ENCODE measurements at regions of chr11 and their contacts with region 1.

Region 1: GRCh38 chr11:118227865-118228785 is 3.3 kb upstream of the JAML start:
- DNase-seq: peak; percentile 70
- ATAC-seq: peak; percentile 73
- H3K4me3 ChIP-seq: peak overlapping the region in 1 of 5 experiments; percentile 21
- H3K4me3 Mint-ChIP-seq: peak overlapping the region; percentile 72
- H3K27ac ChIP-seq: peak overlapping the region; percentile 66 to 80
- H3K27ac Mint-ChIP-seq: peak overlapping the region; percentile 88
- H3K4me1 ChIP-seq: peaks cover 62 to 65% of the 10 kb centered on the region in 2 donors
- H3K4me1 Mint-ChIP-seq: peaks cover 60% of the 10 kb centered on the region
- H3K27me3 ChIP-seq: peaks cover 0 to 7% (median 4%) of the 10 kb centered on the region in 4 experiments
- H3K27me3 Mint-ChIP-seq: peaks cover 8% of the 10 kb centered on the region
- CTCF ChIP-seq: no peak

Region 2: DNA sequence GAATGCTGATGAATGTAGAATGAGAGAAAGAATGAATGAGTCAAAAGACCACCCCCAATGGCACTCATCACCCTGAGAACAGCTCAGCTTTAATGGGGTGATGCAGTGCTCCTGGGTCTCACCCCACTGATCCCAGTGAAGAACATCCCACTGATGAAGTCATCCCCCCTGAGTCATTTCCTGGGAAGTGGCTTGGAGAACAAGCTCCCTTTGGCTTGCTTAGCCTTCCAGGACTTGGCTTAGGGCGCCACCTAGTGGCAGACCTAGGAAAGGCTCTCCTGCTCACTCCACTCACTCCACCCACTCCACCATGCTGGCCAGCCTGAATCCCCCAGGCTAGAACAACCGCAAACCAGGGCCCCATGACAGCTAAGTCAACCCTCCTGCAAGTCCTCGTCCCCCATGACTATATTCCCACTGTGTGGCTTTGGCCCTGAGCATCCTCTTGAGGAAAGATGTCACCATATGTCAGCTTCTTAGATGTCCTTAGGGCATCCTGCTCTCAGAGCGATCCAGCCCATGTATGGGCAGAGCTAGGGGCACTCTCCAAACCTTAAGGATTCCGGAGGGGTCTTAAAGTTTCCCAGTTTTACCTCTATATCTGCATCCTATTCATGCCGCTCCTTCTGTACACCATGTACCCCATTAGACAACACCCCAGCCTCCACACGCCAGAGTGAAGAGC is 281.1 kb before region 1 on chr11:
- CTCF ChIA-PET with region 1: no interaction called
- POLR2A ChIA-PET with region 1: no interaction called
- intact Hi-C with region 1: no loop called
- DNase-seq: peak; percentile 83
- ATAC-seq: peak; percentile 32
- H3K4me3 ChIP-seq: no peak overlapping the region
- H3K4me3 Mint-ChIP-seq: no peak overlapping the region
- H3K27ac ChIP-seq: no peak overlapping the region
- H3K27ac Mint-ChIP-seq: peak overlapping the region; percentile 60
- H3K4me1 ChIP-seq: peaks cover 33 to 46% of the 10 kb centered on the region in 2 donors
- H3K4me1 Mint-ChIP-seq: peaks cover 38% of the 10 kb centered on the region
- H3K27me3 ChIP-seq: no peaks in the 10 kb centered on the region
- H3K27me3 Mint-ChIP-seq: peaks cover 9% of the 10 kb centered on the region
- CTCF ChIP-seq: peak; percentile 98

Region 3: GRCh38 chr11:118010738-118011461 is 217.2 kb before region 1 on chr11:
- CTCF ChIA-PET with region 1: no interaction called
- POLR2A ChIA-PET with region 1: no interaction called
- intact Hi-C with region 1: loop called (anchors 10 kb)
- DNase-seq: peak; percentile 96
- ATAC-seq: peak; percentile 73
- H3K4me3 ChIP-seq: peak overlapping the region in 2 of 5 experiments; percentile 2 to 38
- H3K4me3 Mint-ChIP-seq: peak overlapping the region; percentile 75
- H3K27ac ChIP-seq: peak overlapping the region; percentile 95 to 99
- H3K27ac Mint-ChIP-seq: peak overlapping the region; percentile 99
- H3K4me1 ChIP-seq: peaks cover 99 to 100% of the 10 kb centered on the region in 2 donors
- H3K4me1 Mint-ChIP-seq: peaks cover 100% of the 10 kb centered on the region
- H3K27me3 ChIP-seq: no peaks in the 10 kb centered on the region
- H3K27me3 Mint-ChIP-seq: no peaks in the 10 kb centered on the region
- CTCF ChIP-seq: no peak

Region 4: GRCh38 chr11:118214210-118214914 is 13.8 kb before region 1 on chr11:
- CTCF ChIA-PET with region 1: interaction called, 6 read pairs
- POLR2A ChIA-PET with region 1: interaction called, 3 read pairs
- intact Hi-C with region 1: loop called (anchors 2 kb)
- DNase-seq: peak; percentile 67
- ATAC-seq: peak; percentile 78
- H3K4me3 ChIP-seq: peak overlapping the region in 3 of 5 experiments; percentile 22 to 34 (median 28)
- H3K4me3 Mint-ChIP-seq: peak overlapping the region; percentile 84
- H3K27ac ChIP-seq: no peak overlapping the region
- H3K27ac Mint-ChIP-seq: peak overlapping the region; percentile 85
- H3K4me1 ChIP-seq: peaks cover 50 to 52% of the 10 kb centered on the region in 2 donors
- H3K4me1 Mint-ChIP-seq: peaks cover 53% of the 10 kb centered on the region
- H3K27me3 ChIP-seq: peaks cover 0 to 16% (median 8%) of the 10 kb centered on the region in 4 experiments
- H3K27me3 Mint-ChIP-seq: peaks cover 42% of the 10 kb centered on the region
- CTCF ChIP-seq: no peak

Region 5: DNA sequence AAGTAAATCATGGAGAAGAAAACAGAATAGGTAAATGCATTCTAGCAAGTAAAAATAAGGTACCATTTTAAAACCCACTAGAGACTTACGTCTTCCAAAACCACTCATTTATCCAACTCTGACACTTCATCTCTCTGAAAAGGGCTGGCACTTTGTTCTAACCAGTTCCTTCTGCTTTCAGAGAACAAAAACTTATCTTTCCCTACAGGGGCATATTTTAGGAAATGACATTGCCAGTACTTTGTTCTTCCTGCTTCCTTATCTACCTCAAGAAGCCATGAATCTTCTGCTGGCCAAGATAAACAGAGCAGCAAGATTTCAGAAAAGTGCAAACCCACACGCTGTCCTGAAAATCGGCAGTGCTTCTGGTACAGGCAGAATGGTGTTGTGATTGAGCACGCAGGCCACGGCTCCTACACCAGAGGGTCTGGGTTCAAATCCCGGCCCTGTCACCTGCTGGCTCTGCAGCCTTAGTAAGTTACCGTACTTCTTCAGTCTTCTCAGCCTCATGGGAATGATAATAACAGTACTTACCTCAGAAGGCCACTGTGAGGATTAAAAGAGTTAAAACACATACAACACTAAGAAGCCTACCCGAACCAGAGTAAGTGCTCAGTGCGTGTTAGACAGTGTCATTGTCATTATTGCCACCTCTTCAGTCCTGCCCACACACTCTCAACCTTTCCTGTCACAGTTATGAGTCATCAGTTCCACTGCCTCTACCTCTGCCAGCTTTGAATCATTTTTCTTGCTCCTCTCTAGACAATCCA is 13.1 kb after region 1 on chr11:
- CTCF ChIA-PET with region 1: no interaction called
- POLR2A ChIA-PET with region 1: interaction called, 3 read pairs
- intact Hi-C with region 1: loop called (anchors 2 kb)
- DNase-seq: no peak
- ATAC-seq: peak; percentile 91
- H3K4me3 ChIP-seq: peak overlapping the region in 1 of 5 experiments; percentile 1
- H3K4me3 Mint-ChIP-seq: peak overlapping the region; percentile 5
- H3K27ac ChIP-seq: no peak overlapping the region
- H3K27ac Mint-ChIP-seq: no peak overlapping the region
- H3K4me1 ChIP-seq: peaks cover 15 to 21% of the 10 kb centered on the region in 2 donors
- H3K4me1 Mint-ChIP-seq: peaks cover 39% of the 10 kb centered on the region
- H3K27me3 ChIP-seq: no peaks in the 10 kb centered on the region
- H3K27me3 Mint-ChIP-seq: peaks cover 4% of the 10 kb centered on the region
- CTCF ChIP-seq: no peak

Region 6: DNA sequence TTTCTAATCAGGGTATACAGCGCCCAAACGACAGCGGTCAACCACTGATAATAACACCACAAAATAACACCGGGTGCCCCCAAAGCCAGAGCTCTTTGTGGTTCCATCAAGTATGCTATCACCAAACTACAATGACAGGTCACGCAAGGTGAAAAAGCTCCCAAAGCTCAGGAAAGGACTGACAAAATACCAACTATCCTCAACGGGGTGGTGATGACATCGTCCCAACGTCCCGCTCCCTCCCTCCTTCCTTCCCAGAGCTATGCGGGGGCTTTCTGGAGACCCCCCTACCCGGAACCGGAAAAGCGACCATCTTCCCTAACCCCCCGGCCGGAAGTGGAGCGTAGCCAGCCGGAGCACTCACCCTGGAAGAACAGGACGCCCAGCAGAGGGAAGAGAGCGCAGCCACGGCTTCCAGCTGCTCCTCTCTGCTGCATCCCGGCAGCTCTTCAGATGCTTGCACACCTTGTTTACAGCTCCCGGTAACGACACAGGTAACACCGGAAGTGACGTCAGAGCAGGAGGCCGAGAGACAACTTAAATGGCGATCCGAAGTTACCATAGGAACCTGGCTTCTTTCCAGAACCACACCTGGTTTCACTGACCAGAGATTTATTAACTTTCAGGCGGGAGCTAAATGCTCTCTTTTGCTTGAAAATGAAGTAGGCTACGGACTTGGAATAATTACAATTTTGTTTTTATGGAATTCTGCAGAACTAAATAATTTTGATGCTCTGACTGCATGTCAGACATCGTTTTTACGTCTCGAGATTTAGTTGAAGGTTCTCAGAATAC is 23.9 kb after region 1 on chr11 and contains the start of gene MPZL3:
- CTCF ChIA-PET with region 1: interaction called, 3 read pairs
- POLR2A ChIA-PET with region 1: interaction called, 4 read pairs
- intact Hi-C with region 1: loop called (anchors 1 kb)
- DNase-seq: peak; percentile 95
- ATAC-seq: peak; percentile 76
- H3K4me3 ChIP-seq: peak within 1 kb of the TSS; percentile 96 to 100 (median 97)
- H3K4me3 Mint-ChIP-seq: peak within 1 kb of the TSS; percentile 98
- H3K27ac ChIP-seq: peak within 1 kb of the TSS; percentile 91 to 97
- H3K27ac Mint-ChIP-seq: peak within 1 kb of the TSS; percentile 99
- H3K4me1 ChIP-seq: peaks cover 6 to 10% of the 10 kb centered on the region in 2 donors
- H3K4me1 Mint-ChIP-seq: peaks cover 13% of the 10 kb centered on the region
- H3K27me3 ChIP-seq: no peaks in the 10 kb centered on the region
- H3K27me3 Mint-ChIP-seq: peaks cover 20% of the 10 kb centered on the region
- CTCF ChIP-seq: no peak
- total RNA-seq, gene MPZL3: 4.2 and 4.9 TPM in 2 replicates

Region 7: DNA sequence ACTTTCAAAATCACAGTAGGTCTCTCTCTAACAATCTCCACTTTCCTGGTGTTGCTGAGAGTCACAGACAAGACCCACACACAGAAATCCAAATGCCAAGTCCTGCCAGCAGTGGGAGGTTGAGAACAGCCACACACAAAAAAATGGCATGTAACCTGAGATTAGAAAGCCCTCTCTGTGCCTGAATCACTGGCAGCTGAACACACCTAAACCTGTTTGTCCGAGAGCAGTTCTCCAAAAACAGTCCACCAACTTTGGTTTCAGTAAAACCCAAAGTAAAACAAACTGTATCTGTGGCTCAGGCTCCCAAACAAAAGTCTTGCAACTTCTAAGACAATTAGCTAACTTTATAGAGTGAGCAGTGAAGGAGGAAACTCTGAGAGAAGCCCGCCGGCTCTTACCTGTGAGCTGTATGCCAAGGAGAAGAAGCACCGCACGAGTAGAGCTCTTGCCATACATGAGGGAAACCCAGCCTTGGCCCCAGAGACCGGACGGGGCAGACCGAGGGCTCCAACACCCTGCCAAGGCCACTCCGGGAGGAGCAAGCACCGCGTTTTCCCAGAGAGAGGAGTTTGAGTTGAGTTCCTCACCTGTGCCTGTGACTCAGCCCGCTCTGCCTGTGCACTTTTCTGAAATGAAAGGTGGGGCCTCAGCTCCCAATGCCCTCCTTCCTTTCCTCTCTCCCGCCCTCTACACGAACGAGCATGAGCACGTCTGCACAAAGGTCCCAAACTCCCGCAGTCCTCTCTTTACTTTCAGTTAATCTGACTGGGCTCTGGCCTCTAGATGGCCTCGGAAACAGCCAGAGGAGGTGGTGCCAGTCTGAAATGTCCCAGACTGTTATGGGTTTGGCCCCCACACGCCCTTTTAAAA is 35.8 kb after region 1 on chr11 and contains the start of gene MPZL2:
- CTCF ChIA-PET with region 1: no interaction called
- POLR2A ChIA-PET with region 1: no interaction called
- intact Hi-C with region 1: loop called (anchors 5 kb)
- DNase-seq: peak; percentile 27
- ATAC-seq: peak; percentile 74
- H3K4me3 ChIP-seq: peak within 1 kb of the TSS in 2 of 5 experiments; percentile 5 to 8
- H3K4me3 Mint-ChIP-seq: peak within 1 kb of the TSS; percentile 70
- H3K27ac ChIP-seq: no peak within 1 kb of the TSS
- H3K27ac Mint-ChIP-seq: no peak within 1 kb of the TSS
- H3K4me1 ChIP-seq: peaks cover 9 to 11% of the 10 kb centered on the region in 2 donors
- H3K4me1 Mint-ChIP-seq: peaks cover 10% of the 10 kb centered on the region
- H3K27me3 ChIP-seq: peaks cover 0 to 56% (median 44%) of the 10 kb centered on the region in 4 experiments
- H3K27me3 Mint-ChIP-seq: peaks cover 43% of the 10 kb centered on the region
- CTCF ChIP-seq: no peak
- total RNA-seq, gene MPZL2: 1.2 TPM in 1 of 2 replicates, not detected in the other

Region 8: GRCh38 chr11:118785362-118785761 is 557.2 kb after region 1 on chr11:
- CTCF ChIA-PET with region 1: no interaction called
- POLR2A ChIA-PET with region 1: no interaction called
- intact Hi-C with region 1: no loop called
- DNase-seq: no peak
- ATAC-seq: no peak
- H3K4me3 ChIP-seq: no peak overlapping the region
- H3K4me3 Mint-ChIP-seq: peak overlapping the region; percentile 71
- H3K27ac ChIP-seq: peak overlapping the region in 1 of 2 donors; percentile 68
- H3K27ac Mint-ChIP-seq: no peak overlapping the region
- H3K4me1 ChIP-seq: peaks cover 59 to 61% of the 10 kb centered on the region in 2 donors
- H3K4me1 Mint-ChIP-seq: peaks cover 55% of the 10 kb centered on the region
- H3K27me3 ChIP-seq: no peaks in the 10 kb centered on the region
- H3K27me3 Mint-ChIP-seq: no peaks in the 10 kb centered on the region
- CTCF ChIP-seq: no peak